Activated naive CD4-positive, alpha-beta T cell treated with anti-CD3 and anti-CD28 coated beads, Interleukin-2, amount 10 ng/mL, durations not matched to agents 7 days and 5 days (primary cell): ENCODE measurements at regions of chr2 and their contacts with region 1.

Region 1: DNA sequence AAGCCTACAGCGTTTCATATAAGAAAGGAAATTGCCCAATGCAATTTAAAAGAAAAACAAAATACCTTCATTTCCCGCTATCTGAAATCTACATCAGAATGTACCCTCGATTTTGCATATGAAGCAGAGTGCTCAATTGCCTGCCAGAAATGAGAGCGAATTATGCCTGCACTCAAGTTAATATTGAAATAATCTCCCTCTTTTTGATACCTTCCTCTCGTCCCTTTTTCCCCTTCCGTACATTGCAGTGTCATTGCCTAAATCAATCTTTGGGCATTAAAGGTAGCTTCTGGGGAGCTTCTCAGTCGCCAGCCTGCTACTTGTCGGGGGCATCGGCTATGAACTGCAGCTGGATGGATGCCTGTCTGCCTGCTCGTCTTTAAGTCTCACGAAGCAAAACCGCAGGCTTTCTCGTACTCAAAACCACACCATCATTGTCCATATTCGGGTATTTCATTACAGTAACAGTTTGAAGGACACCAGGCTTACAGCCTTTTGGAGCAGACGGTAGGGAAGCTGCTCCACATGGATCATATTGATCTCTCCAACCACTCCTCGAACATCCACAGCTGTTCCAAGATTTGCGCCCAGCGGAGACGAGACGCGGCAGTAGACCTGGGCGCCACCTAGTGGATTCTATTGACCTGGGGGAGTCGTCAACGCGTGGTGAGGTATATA is 64.0 kb upstream of the HNRNPA3 start:
- DNase-seq: peak; percentile 82
- H3K4me3 Mint-ChIP-seq: peak overlapping the region; percentile 70
- H3K27ac Mint-ChIP-seq: no peak overlapping the region
- H3K4me1 Mint-ChIP-seq: peaks cover 15% of the 10 kb centered on the region
- H3K27me3 Mint-ChIP-seq: peaks cover 31% of the 10 kb centered on the region

Region 2: DNA sequence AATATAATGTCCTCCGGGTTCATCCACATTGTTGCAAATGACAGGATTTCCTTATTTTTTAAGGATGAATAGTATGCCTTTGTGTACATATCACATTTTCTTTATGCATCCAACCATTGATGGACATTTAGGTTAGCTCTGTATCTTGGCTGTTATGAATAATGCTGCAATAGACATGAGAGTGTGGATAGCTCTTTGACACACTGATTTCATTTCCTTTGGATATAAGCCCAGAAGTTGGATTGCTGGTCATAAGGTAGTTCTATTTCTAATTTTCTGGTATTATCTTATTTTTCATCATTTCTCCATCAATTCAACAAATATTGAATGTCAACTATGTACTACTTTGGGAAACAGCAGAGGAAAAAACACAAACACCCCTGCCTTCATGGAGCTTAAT is 456.1 kb before region 1 on chr2:
- CTCF ChIA-PET with region 1: no interaction called
- DNase-seq: no peak
- H3K4me3 Mint-ChIP-seq: no peak overlapping the region
- H3K27ac Mint-ChIP-seq: no peak overlapping the region
- H3K4me1 Mint-ChIP-seq: no peaks in the 10 kb centered on the region
- H3K27me3 Mint-ChIP-seq: peaks cover 5% of the 10 kb centered on the region

Region 3: GRCh38 chr2:176814306-176815052 is 334.1 kb before region 1 on chr2:
- CTCF ChIA-PET with region 1: interaction called, 23 read pairs
- DNase-seq: no peak
- H3K4me3 Mint-ChIP-seq: no peak overlapping the region
- H3K27ac Mint-ChIP-seq: no peak overlapping the region
- H3K4me1 Mint-ChIP-seq: peaks cover 7% of the 10 kb centered on the region
- H3K27me3 Mint-ChIP-seq: peaks cover 2% of the 10 kb centered on the region

Region 4: DNA sequence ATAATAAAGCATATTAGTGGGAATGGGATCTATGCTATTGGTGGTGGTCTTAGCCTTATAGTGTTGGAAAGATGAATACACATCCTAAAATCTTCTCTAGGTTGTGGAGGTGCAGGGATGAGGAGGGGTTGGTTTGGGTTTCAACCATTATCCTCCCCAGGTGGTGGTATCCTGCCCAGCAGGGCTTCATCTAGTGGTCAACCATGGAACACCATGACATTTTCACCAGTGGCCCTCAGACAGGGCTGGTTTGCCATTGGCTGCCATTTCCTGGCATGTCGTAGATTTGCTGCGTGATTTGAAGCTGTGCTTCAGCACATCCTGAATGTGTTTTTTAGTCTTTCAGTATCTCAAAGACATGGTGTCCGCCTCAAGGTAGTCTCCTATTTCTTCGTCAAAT is 327.3 kb before region 1 on chr2:
- CTCF ChIA-PET with region 1: interaction called, 19 read pairs
- DNase-seq: no peak
- H3K4me3 Mint-ChIP-seq: no peak overlapping the region
- H3K27ac Mint-ChIP-seq: no peak overlapping the region
- H3K4me1 Mint-ChIP-seq: peaks cover 27% of the 10 kb centered on the region
- H3K27me3 Mint-ChIP-seq: no peaks in the 10 kb centered on the region

Region 5: GRCh38 chr2:177072090-177072489 is 76.5 kb before region 1 on chr2:
- CTCF ChIA-PET with region 1: no interaction called
- DNase-seq: no peak
- H3K4me3 Mint-ChIP-seq: no peak overlapping the region
- H3K27ac Mint-ChIP-seq: no peak overlapping the region
- H3K4me1 Mint-ChIP-seq: no peaks in the 10 kb centered on the region
- H3K27me3 Mint-ChIP-seq: peaks cover 15% of the 10 kb centered on the region